H1 (cell line): ENCODE measurements at regions of chr4 and their contacts with region 1.

Region 1: GRCh38 chr4:186078980-186079695 is 10.2 kb downstream of the TLR3 start:
- DNase-seq: no peak
- H3K4me3 ChIP-seq: 0 out of 8 replicates have a peak overlapping the region, but pooled peaks of 1 of the 4 experiments have one; percentile 7
- H3K27ac ChIP-seq: no peak overlapping the region
- H3K4me1 ChIP-seq: peaks cover 9 to 17% (median 13%) of the 10 kb centered on the region in 4 experiments
- H3K27me3 ChIP-seq: no peaks in the 10 kb centered on the region
- CTCF ChIP-seq: no peak
- EP300 ChIP-seq: no peak
- POLR2A ChIP-seq: no peak
- RAD21 ChIP-seq: peak; percentile 20 to 21; a peak in 1 of 4 replicates

Region 2: DNA sequence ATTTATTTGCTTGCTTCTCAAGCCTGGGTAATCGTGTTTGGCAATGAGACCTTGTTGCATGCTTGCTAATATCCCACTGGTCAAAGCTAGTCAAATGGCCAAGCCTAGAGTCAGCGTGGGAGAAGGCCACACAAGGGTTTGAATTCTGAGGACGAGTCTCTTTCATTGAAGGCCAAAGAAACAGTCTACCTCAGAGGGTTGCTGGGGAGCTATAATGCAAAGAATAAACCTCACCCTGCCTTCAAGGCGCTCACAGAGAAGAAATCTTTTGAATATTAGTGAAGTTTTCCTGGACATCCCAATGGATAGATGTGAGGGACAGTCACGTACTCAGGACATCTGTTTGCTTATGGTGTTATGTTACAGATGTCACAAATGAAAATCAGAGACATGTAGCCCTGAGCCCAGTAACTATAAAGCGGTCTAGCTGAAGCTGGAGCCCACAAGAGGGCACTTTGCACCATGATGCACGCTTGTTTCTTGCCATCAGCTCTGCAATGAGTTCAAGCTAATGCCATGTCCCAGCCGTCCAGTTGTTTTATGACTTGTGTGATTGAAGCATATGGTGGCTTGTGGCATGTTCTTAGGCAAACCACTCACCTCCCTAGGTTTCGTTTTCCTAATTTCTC is 11.3 kb before region 1 on chr4:
- CTCF ChIA-PET with region 1: interaction called, 40 read pairs
- POLR2A ChIA-PET with region 1: interaction called, 3 read pairs
- DNase-seq: peak; percentile 10 to 45
- H3K4me3 ChIP-seq: no peak overlapping the region
- H3K27ac ChIP-seq: no peak overlapping the region
- H3K4me1 ChIP-seq: peaks cover 0 to 7% (median 3%) of the 10 kb centered on the region in 4 experiments; a peak in 3 of 7 replicates
- H3K27me3 ChIP-seq: no peaks in the 10 kb centered on the region
- CTCF ChIP-seq: peak; percentile 40 to 74 (median 59)
- EP300 ChIP-seq: no peak
- POLR2A ChIP-seq: no peak
- RAD21 ChIP-seq: peak; percentile 77 to 86